WTC11 (cell line): ENCODE measurements at regions of chr10 and their contacts with region 1.

Region 1: GRCh38 chr10:80132299-80133139 is at the start of gene PLAC9:
- DNase-seq: peak; percentile 63
- ATAC-seq: peak; percentile 73
- H3K4me3 Mint-ChIP-seq: peak within 1 kb of the TSS; percentile 74
- H3K27ac Mint-ChIP-seq: no peak within 1 kb of the TSS
- H3K4me1 Mint-ChIP-seq: peaks cover 21% of the 10 kb centered on the region
- H3K27me3 Mint-ChIP-seq: peaks cover 31% of the 10 kb centered on the region
- CTCF ChIP-seq: no peak
- total RNA-seq, gene PLAC9: 4.6 to 7.3 TPM (median 6.6 TPM) in 3 replicates

Region 2: GRCh38 chr10:80064120-80064886 is 68.2 kb before region 1 on chr10:
- CTCF ChIA-PET with region 1: interaction called, 31 read pairs
- POLR2A ChIA-PET with region 1: no interaction called
- DNase-seq: no peak
- ATAC-seq: no peak
- H3K4me3 Mint-ChIP-seq: no peak overlapping the region
- H3K27ac Mint-ChIP-seq: no peak overlapping the region
- H3K4me1 Mint-ChIP-seq: no peaks in the 10 kb centered on the region
- H3K27me3 Mint-ChIP-seq: peaks cover 4% of the 10 kb centered on the region
- CTCF ChIP-seq: no peak